WTC11 (cell line): ENCODE measurements at regions of chr15 and their contacts with region 1.

Region 1: DNA sequence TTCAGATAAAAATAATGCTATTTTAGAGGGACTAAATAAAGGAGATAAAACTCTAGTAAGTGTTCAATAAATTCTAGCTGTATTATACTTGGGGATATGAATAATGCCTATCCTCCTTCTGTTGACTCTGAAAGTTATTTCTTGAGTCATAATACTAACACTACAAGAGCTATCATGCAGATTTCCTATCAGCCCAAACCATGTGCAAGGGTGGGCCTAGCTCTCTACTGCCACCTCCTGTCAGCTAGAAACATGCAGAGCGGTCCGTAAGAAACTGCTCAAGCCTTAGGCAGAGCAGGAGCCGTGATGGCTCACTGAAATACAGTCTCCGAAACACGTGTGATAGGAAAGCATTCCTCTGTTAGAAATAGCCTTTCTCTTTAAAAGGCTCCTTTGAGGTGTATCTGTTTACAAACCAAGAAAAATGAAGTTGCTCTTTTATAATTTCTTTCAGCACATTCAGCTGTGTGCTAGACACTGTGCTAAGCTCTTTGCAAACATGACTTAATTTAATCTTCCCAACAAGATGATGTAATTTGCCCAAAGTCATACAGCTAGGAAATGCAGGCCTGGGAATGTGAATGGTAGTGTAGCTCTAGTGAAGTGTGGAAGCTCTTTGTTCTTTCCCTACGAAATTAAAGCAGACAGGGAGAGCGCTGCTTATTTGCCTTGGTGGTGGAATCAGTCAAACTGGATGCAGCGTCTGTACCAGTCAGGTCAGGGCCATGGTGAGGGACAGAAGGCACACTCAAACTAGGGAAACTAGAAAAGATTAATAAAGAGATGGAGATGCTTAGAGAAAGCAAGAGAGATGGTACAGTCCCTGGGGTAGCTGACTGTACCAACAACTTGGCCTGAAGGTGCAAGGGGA is 43.1 kb downstream of the MTHFS start:
- DNase-seq: peak; percentile 72
- ATAC-seq: peak; percentile 98
- H3K4me3 Mint-ChIP-seq: no peak overlapping the region
- H3K27ac Mint-ChIP-seq: peak overlapping the region; percentile 63
- H3K4me1 Mint-ChIP-seq: peaks cover 5% of the 10 kb centered on the region
- H3K27me3 Mint-ChIP-seq: no peaks in the 10 kb centered on the region
- CTCF ChIP-seq: peak; percentile 83

Region 2: GRCh38 chr15:79675982-79676381 is 177.7 kb before region 1 on chr15:
- CTCF ChIA-PET with region 1: interaction called, 13 read pairs
- POLR2A ChIA-PET with region 1: no interaction called
- DNase-seq: no peak
- ATAC-seq: no peak; the same call in 1 of the 2 replicates
- H3K4me3 Mint-ChIP-seq: no peak overlapping the region
- H3K27ac Mint-ChIP-seq: no peak overlapping the region
- H3K4me1 Mint-ChIP-seq: peaks cover 47% of the 10 kb centered on the region
- H3K27me3 Mint-ChIP-seq: no peaks in the 10 kb centered on the region; the same call in 1 of the 2 replicates
- CTCF ChIP-seq: no peak

Region 3: DNA sequence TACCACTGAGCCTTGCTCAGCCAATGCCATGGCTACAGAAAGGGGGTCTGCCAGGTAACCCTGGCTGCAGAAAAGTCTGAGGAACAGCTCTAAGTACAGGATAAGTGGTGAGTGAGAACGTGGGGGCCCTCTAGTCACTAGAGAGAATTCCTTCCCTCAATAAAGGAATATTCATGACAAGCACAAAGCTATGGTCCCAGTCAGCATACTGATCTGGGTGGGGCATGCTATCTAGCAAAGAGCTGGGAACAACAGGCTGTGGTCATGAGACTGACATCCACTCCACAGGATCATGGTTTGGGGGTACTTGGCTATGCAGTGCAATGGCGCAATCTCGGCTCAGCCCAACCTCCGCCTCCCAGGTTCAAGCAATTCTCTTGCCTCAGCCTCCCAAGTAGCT is 97.3 kb before region 1 on chr15:
- CTCF ChIA-PET with region 1: no interaction called
- POLR2A ChIA-PET with region 1: no interaction called
- DNase-seq: no peak
- ATAC-seq: no peak
- H3K4me3 Mint-ChIP-seq: no peak overlapping the region
- H3K27ac Mint-ChIP-seq: no peak overlapping the region
- H3K4me1 Mint-ChIP-seq: no peaks in the 10 kb centered on the region
- H3K27me3 Mint-ChIP-seq: no peaks in the 10 kb centered on the region
- CTCF ChIP-seq: no peak

Region 4: GRCh38 chr15:79872358-79873017 is 18.8 kb after region 1 on chr15:
- CTCF ChIA-PET with region 1: interaction called, 10 read pairs
- POLR2A ChIA-PET with region 1: no interaction called
- DNase-seq: no peak
- ATAC-seq: peak; percentile 57
- H3K4me3 Mint-ChIP-seq: no peak overlapping the region
- H3K27ac Mint-ChIP-seq: peak overlapping the region; percentile 8
- H3K4me1 Mint-ChIP-seq: no peaks in the 10 kb centered on the region
- H3K27me3 Mint-ChIP-seq: peaks cover 5% of the 10 kb centered on the region; the same call in 1 of the 2 replicates
- CTCF ChIP-seq: no peak